ENCODE measurements at regions of chr16 and their contacts with region 1.

Region 1: GRCh38 chr16:7624871-7625766 is 292.5 kb downstream of the RBFOX1 start:
- DNase-seq: no peak
- ATAC-seq: no peak
- H3K4me3 ChIP-seq: no peak overlapping the region
- H3K4me3 Mint-ChIP-seq: no peak overlapping the region
- H3K27ac ChIP-seq: no peak overlapping the region
- H3K27ac Mint-ChIP-seq: no peak overlapping the region
- H3K4me1 ChIP-seq: no peaks in the 10 kb centered on the region
- H3K4me1 Mint-ChIP-seq: no peaks in the 10 kb centered on the region
- H3K27me3 ChIP-seq: no peaks in the 10 kb centered on the region
- H3K27me3 Mint-ChIP-seq: no peaks in the 10 kb centered on the region
- CTCF ChIP-seq: no peak

Region 2: DNA sequence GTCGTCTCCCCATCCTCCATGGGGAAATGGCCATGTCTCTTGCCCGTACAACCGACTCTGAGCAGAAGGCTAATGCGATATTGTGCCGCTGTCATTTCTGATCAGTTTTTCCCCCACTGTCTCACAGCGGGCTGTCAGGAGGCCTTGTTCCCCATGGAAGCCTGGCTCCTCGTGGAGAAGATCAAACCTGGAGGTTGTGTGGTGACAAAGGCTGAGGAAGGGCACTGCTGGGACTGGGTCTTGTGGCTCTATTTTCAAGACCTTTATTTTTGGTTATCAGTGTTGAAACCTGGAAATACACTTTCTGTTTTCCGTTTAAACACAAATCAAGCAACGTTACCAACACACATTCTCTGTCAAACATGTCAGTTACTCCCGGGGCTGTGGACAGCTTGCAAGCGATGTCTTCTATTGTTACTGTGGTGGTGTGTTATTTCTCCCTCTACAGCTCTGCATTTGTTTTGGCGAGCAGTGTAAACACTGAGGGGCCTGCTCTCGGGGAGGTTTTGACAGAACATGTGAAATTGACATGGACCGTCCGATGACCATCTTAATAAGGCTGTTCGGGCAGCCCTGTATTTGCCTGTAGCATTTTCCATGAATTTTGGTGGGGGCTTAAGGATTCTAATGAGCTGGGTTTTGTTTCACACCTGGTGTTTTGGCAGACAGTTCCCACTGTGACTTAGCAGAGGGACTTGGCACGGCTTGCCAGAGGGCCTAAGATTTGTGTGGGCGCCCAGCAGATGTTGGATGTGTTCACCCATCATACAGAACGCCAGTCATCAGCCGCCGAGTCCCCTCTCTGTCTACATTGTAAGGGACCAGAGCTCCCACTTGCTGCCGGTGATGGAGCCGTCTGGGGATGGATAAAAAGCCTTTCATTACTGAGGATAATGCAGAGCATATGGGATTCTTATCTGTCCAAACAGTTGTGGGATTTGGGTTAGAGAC is 280.0 kb before region 1 on chr16:
- CTCF ChIA-PET with region 1: no interaction called
- POLR2A ChIA-PET with region 1: no interaction called
- intact Hi-C with region 1: loop called (anchors 5 kb)
- DNase-seq: no peak
- ATAC-seq: no peak
- H3K4me3 ChIP-seq: no peak overlapping the region
- H3K4me3 Mint-ChIP-seq: no peak overlapping the region
- H3K27ac ChIP-seq: no peak overlapping the region
- H3K27ac Mint-ChIP-seq: no peak overlapping the region
- H3K4me1 ChIP-seq: no peaks in the 10 kb centered on the region
- H3K4me1 Mint-ChIP-seq: no peaks in the 10 kb centered on the region
- H3K27me3 ChIP-seq: no peaks in the 10 kb centered on the region
- H3K27me3 Mint-ChIP-seq: no peaks in the 10 kb centered on the region
- CTCF ChIP-seq: no peak